Dendritic cell treated with granulocyte-macrophage colony-stimulating factor and Interleukin-4, amounts not matched to agents 40 ng/mL and 50 ng/mL, for 4 days (primary cell): ENCODE measurements at regions of chr6 and their contacts with region 1.

Region 1: DNA sequence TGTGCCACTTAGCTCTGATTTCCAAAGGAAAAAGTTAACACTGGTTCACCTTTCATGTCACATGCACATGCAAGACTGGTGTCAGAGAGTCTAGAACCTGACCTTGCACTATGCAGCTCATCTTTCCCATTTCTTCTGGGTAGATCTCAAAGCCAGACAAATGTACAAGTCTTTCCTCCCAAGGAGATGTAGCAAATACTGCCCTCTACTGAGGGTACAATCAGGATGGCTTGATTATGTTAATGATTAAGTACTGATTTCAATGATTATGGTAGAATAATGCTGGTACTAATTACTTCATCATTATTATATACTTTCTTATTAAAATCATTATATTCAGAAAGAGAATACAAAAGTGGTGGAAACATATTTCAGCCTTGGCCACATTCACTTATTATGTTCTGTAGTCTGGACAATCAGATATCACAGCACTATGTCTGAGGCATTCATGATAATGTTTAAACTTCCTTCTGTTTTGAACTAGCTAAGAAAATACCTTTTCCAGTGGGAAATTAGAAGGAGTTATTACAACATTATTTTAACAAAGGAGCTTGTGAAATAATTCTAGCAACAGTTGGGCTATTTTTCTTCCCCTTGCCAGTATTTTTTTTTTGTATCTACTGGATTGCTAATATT is 68.5 kb upstream of the FOXO3 start:
- H3K4me3 Mint-ChIP-seq: no peak overlapping the region
- H3K27ac Mint-ChIP-seq: no peak overlapping the region
- H3K4me1 Mint-ChIP-seq: no peaks in the 10 kb centered on the region
- H3K27me3 Mint-ChIP-seq: no peaks in the 10 kb centered on the region

Region 2: DNA sequence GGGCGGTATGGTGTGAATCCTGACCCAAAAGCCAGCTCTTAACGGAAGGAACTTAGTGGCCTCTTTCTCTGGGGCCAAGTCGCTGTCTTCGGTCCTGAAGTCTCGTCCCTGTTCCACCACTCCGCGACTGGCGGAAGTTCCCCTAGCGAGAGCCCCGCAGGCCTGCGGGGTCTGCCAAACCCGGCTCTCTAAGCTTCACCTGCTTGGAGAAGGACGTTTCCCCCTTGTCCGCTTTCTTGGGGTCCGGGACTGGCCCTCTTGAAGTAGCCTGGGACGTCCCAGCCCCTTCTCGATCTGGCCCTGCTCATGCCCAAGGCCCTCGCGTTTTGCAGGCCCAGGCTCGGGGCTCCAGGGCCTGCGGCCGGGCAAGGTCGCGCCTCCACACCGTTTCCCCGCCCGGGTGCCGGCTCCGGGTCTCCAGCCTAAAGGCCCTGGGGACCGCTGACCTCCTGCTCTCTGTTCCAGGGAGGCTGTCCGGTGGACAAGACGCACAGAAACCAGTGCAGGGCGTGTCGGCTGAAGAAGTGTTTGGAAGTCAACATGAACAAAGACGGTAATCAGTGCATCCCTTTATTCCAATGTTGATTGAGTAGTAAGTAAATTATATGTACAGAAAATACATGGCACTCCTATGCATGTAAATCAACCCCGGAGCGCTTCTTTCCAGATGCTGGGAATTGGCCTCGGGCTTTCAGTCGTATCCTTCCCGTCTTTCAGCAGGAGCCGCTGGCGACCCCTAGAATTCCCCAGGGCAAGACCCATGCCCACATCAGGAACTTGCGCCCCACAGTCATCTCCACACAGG is 317.7 kb before region 1 on chr6:
- intact Hi-C with region 1: loop called (anchors 10 kb)
- H3K4me3 Mint-ChIP-seq: no peak overlapping the region
- H3K27ac Mint-ChIP-seq: no peak overlapping the region
- H3K4me1 Mint-ChIP-seq: peaks cover 41% of the 10 kb centered on the region
- H3K27me3 Mint-ChIP-seq: peaks cover 86% of the 10 kb centered on the region

Region 3: GRCh38 chr6:108250240-108250866 is 241.9 kb before region 1 on chr6:
- intact Hi-C with region 1: loop called (anchors 10 kb)
- H3K4me3 Mint-ChIP-seq: no peak overlapping the region
- H3K27ac Mint-ChIP-seq: no peak overlapping the region
- H3K4me1 Mint-ChIP-seq: peaks cover 58% of the 10 kb centered on the region
- H3K27me3 Mint-ChIP-seq: no peaks in the 10 kb centered on the region

Region 4: GRCh38 chr6:108526739-108527174 is 34.5 kb after region 1 on chr6:
- intact Hi-C with region 1: no loop called
- H3K4me3 Mint-ChIP-seq: no peak overlapping the region
- H3K27ac Mint-ChIP-seq: no peak overlapping the region
- H3K4me1 Mint-ChIP-seq: no peaks in the 10 kb centered on the region
- H3K27me3 Mint-ChIP-seq: no peaks in the 10 kb centered on the region